ENCODE measurements at regions of chr14 and their contacts with region 1.

Region 1: GRCh38 chr14:52325126-52325525 is 11.0 kb downstream of the PTGER2 start:
- DNase-seq: no peak

Region 2: GRCh38 chr14:52286661-52287649 is 38.2 kb before region 1 on chr14:
- intact Hi-C with region 1: loop called in 1 of 2 experiments (anchors 1 kb)
- DNase-seq: no peak

Region 3: GRCh38 chr14:54040846-54041245 is 1715.7 kb after region 1 on chr14:
- intact Hi-C with region 1: no loop called
- DNase-seq: no peak

Measured in posterior vena cava (tissue), 2 donors.